Activated CD4-positive, alpha-beta T cell treated with anti-CD3 and anti-CD28 coated beads for 36 hours (primary cell): ENCODE measurements at regions of chr17 and their contacts with region 1.

Region 1: DNA sequence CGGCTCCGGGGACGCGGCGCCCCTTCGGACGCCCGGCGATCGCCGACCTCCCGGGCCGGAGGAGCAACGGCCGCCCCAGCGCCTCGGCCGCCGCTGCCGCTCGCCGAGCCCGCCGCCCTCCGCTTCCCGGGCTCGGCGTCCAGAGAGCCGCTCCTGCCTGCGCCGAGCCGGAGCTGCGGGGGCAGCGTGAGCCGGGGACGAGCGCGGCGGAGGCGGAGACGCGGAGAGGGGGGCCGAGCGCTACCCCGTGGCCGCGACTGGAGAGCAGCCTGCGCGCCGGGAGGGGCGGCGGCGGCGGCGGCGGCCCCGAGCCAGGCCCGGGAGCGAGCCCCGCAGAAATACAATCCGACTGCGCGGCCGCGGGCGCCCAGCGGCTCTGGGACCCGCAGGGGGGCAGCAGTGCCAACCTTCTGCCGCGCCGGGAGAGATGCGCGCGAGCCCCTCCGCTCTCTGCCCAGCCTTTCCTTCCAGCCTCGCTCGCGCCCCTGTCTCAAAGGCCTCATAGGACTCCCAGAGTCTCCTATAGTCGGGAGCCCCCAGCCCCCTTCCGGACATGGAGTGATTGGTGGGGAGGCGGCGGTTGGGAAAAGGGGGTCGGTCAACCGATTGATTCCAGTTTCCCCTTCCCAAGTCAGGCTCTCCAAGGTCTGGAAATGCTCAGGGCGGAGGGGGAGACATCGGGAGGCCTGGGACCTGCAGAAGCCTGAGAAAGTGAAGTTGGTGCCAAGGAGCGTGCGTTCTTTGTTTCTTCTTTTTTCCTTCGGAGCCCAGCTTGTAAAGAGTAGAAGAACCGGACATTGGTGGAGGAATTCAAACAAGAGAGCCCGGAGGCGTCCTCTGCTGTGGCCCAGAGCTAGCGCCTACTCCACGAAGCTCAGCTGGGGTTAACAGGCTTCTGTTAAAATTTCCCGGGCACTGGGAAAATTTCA is 1.1 kb upstream of the SDK2 start:
- DNase-seq: peak; percentile 66
- ATAC-seq: peak; percentile 54
- H3K4me3 Mint-ChIP-seq: peak overlapping the region; percentile 32
- H3K27ac Mint-ChIP-seq: no peak overlapping the region
- H3K4me1 Mint-ChIP-seq: peaks cover 14% of the 10 kb centered on the region
- H3K27me3 Mint-ChIP-seq: peaks cover 12% of the 10 kb centered on the region

Region 2: DNA sequence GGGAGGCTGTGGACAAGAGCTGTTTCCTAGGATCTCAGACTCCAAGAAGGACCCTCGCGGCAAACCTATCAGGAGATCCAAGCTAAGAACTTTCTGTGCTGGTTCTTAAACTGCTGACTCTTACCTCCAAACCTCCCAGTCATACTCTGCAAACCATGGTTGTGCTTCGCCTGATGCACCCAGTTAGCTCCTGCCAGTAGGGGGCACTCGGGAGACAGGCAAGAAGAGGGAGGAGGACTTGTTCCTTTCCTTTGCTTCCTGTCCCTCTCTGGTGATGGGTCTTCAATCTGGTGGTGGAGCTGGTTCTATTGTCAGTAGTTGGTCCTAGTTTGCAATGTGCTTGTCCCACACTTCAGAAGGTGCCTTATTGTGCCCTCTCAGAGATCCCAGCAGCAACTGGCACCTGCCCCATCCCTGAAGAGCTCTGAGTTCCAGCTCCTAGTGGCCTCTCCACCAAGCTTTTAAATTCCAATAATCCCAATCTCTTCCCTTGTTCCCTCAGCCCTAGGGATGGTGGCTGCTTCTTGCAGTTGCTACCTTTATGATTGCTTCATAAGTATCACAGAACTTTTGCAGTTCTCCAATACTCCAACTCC is 444.7 kb after region 1 on chr17:
- CTCF ChIA-PET with region 1: no interaction called
- POLR2A ChIA-PET with region 1: no interaction called
- intact Hi-C with region 1: no loop called
- DNase-seq: peak; percentile 87
- ATAC-seq: peak; percentile 60
- H3K4me3 Mint-ChIP-seq: no peak overlapping the region
- H3K27ac Mint-ChIP-seq: no peak overlapping the region
- H3K4me1 Mint-ChIP-seq: no peaks in the 10 kb centered on the region
- H3K27me3 Mint-ChIP-seq: peaks cover 13% of the 10 kb centered on the region

Region 3: GRCh38 chr17:74176546-74177001 is 531.3 kb after region 1 on chr17:
- CTCF ChIA-PET with region 1: no interaction called
- POLR2A ChIA-PET with region 1: no interaction called
- intact Hi-C with region 1: loop called (anchors 5 kb)
- DNase-seq: peak; percentile 72
- ATAC-seq: peak; percentile 80
- H3K4me3 Mint-ChIP-seq: no peak overlapping the region
- H3K27ac Mint-ChIP-seq: no peak overlapping the region
- H3K4me1 Mint-ChIP-seq: no peaks in the 10 kb centered on the region
- H3K27me3 Mint-ChIP-seq: peaks cover 9% of the 10 kb centered on the region